Activated CD8-positive, alpha-beta T cell treated with anti-CD3 and anti-CD28 coated beads for 36 hours (primary cell): ENCODE measurements at regions of chr2 and their contacts with region 1.

Region 1: GRCh38 chr2:143110758-143111428 is 18.3 kb upstream of the ARHGAP15 start:
- DNase-seq: peak; percentile 79
- ATAC-seq: peak; percentile 85
- H3K4me3 Mint-ChIP-seq: peak overlapping the region; percentile 64
- H3K27ac Mint-ChIP-seq: peak overlapping the region; percentile 90
- H3K4me1 Mint-ChIP-seq: peaks cover 31% of the 10 kb centered on the region
- H3K27me3 Mint-ChIP-seq: no peaks in the 10 kb centered on the region
- CTCF ChIP-seq: peak; percentile 95

Region 2: DNA sequence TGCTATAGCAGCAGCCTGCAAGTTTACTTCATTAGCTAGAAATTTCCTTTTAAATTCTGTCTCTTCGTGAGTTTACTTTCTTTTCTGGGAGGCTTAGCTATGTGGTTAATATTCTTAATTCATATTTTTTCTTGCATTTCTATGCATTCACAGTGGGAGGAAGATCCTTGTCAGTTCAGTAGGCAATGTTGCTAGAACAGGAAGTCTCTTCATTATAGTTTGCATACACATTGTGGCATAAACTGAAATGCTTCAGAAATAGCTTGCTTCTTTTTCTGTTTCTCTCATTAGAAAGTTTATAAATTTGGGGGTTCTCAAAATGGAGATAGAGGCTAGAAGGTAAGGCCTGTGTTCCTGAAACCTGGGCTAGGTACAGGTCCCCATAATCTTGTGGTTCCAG is 10.2 kb after region 1 on chr2:
- CTCF ChIA-PET with region 1: interaction called, 23 read pairs
- POLR2A ChIA-PET with region 1: interaction called, 7 read pairs
- intact Hi-C with region 1: no loop called
- DNase-seq: no peak
- ATAC-seq: no peak
- H3K4me3 Mint-ChIP-seq: peak overlapping the region; percentile 34
- H3K27ac Mint-ChIP-seq: peak overlapping the region; percentile 36
- H3K4me1 Mint-ChIP-seq: peaks cover 33% of the 10 kb centered on the region
- H3K27me3 Mint-ChIP-seq: no peaks in the 10 kb centered on the region
- CTCF ChIP-seq: no peak

Region 3: GRCh38 chr2:143140864-143141661 is 30.2 kb after region 1 on chr2:
- CTCF ChIA-PET with region 1: interaction called, 11 read pairs
- POLR2A ChIA-PET with region 1: no interaction called
- intact Hi-C with region 1: no loop called
- DNase-seq: no peak
- ATAC-seq: peak; percentile 54
- H3K4me3 Mint-ChIP-seq: peak overlapping the region; percentile 71
- H3K27ac Mint-ChIP-seq: peak overlapping the region; percentile 92
- H3K4me1 Mint-ChIP-seq: peaks cover 83% of the 10 kb centered on the region
- H3K27me3 Mint-ChIP-seq: no peaks in the 10 kb centered on the region
- CTCF ChIP-seq: no peak

Region 4: DNA sequence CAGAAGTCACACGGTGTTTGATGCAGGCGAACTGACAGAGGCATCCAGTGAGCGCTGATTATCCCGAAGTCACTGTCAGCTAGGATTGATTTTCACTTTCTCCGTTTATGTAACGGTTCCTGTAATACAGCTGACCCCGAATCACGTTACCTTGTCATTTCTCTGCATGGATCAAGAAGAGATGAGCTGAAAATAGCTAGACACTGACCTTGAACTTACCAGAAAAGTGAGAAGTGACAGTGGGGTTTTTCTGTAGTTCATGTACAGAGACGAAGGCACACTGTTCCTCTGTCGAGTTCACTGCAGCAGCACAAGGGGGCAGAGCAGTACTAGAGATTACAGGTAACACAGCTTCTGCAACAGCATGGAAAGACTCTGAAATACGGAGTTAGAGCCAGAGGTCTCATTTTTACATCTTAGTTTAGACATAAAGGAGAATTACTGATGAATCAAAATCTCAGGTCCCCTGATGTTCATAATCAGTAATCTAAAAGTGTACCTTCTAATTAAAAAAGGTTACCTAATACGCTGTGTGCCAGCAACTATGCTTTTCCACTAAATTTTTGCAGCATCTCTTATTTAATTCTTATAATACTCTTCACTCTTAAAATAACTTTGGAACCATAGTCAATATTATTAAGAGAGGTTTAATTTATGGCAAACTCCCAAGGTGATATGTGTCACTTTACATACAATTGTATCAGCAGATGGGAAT is 51.4 kb after region 1 on chr2:
- CTCF ChIA-PET with region 1: interaction called, 123 read pairs
- POLR2A ChIA-PET with region 1: interaction called, 3 read pairs
- intact Hi-C with region 1: loop called (anchors 5 kb)
- DNase-seq: peak; percentile 70
- ATAC-seq: peak; percentile 95
- H3K4me3 Mint-ChIP-seq: no peak overlapping the region
- H3K27ac Mint-ChIP-seq: peak overlapping the region; percentile 31
- H3K4me1 Mint-ChIP-seq: peaks cover 79% of the 10 kb centered on the region
- H3K27me3 Mint-ChIP-seq: no peaks in the 10 kb centered on the region
- CTCF ChIP-seq: peak; percentile 82

Region 5: DNA sequence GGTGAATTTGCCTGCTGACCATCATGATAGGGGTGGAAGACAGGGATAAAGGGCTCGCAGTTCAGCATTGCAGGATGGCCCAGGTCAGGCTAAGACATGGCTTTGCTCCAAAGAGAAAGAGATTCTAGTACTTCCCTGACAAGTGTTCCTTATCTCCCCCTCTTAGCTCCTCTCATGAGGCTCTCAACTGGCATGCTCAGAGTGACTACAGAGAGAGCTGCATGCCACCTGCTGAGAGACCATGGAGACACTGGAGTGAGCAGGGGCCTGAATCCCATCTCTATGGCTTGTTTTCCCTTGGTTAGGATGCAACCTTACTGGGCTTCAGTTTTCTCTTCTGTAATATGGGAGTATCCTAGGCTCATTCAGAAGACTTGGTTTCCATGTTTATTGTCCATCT is 112.7 kb after region 1 on chr2:
- CTCF ChIA-PET with region 1: interaction called, 33 read pairs
- POLR2A ChIA-PET with region 1: no interaction called
- intact Hi-C with region 1: loop called (anchors 5 kb)
- DNase-seq: no peak
- ATAC-seq: no peak
- H3K4me3 Mint-ChIP-seq: no peak overlapping the region
- H3K27ac Mint-ChIP-seq: peak overlapping the region; percentile 59
- H3K4me1 Mint-ChIP-seq: peaks cover 51% of the 10 kb centered on the region
- H3K27me3 Mint-ChIP-seq: no peaks in the 10 kb centered on the region
- CTCF ChIP-seq: no peak

Region 6: GRCh38 chr2:143254110-143254509 is 143.2 kb after region 1 on chr2:
- CTCF ChIA-PET with region 1: interaction called, 98 read pairs
- POLR2A ChIA-PET with region 1: interaction called, 4 read pairs
- intact Hi-C with region 1: loop called (anchors 1 kb)
- DNase-seq: peak; percentile 60
- ATAC-seq: peak; percentile 33
- H3K4me3 Mint-ChIP-seq: peak overlapping the region; percentile 33
- H3K27ac Mint-ChIP-seq: peak overlapping the region; percentile 85
- H3K4me1 Mint-ChIP-seq: peaks cover 70% of the 10 kb centered on the region
- H3K27me3 Mint-ChIP-seq: no peaks in the 10 kb centered on the region
- CTCF ChIP-seq: no peak

Region 7: GRCh38 chr2:143679617-143680016 is 568.7 kb after region 1 on chr2:
- CTCF ChIA-PET with region 1: no interaction called
- POLR2A ChIA-PET with region 1: no interaction called
- intact Hi-C with region 1: no loop called
- DNase-seq: no peak
- ATAC-seq: no peak
- H3K4me3 Mint-ChIP-seq: no peak overlapping the region
- H3K27ac Mint-ChIP-seq: no peak overlapping the region
- H3K4me1 Mint-ChIP-seq: peaks cover 26% of the 10 kb centered on the region
- H3K27me3 Mint-ChIP-seq: no peaks in the 10 kb centered on the region
- CTCF ChIP-seq: no peak